ENCODE measurements at regions of chr6 and their contacts with region 1.

Region 1: DNA sequence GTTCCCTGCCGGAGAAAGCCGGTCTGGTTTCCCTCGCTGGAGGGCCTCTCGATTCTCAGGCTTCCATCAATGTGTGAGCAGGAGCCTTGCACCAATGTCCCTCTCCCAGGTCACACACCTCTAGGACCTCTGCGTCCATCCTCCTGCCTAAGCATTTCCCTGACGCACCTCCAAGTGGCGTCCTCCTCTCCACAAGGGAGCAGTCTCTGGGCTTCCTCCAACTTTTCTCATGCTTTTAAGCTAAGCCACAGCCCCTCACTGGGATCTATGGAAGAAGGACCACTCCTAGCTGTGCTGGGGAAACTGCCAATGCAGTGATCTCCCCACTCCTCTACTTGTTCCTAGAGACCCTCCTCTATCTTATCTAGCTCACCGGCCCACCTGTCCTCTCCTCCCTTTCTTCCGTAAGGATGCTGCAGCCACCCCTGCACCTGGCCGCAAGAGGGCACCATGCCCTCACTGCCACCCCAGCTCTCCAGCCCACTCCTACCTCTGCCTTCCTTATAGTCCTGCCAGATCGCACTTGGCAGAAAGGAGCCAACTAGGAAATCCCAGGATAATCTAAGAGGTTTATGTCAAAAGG is 258.7 kb downstream of the LRFN2 start:
- DNase-seq: peak; percentile 56
- ATAC-seq: peak; percentile 69
- H3K4me3 Mint-ChIP-seq: no peak overlapping the region
- H3K27ac Mint-ChIP-seq: no peak overlapping the region
- H3K4me1 Mint-ChIP-seq: peaks cover 30% of the 10 kb centered on the region
- H3K27me3 Mint-ChIP-seq: peaks cover 15% of the 10 kb centered on the region

Region 2: GRCh38 chr6:40912158-40912946 is 583.9 kb after region 1 on chr6:
- CTCF ChIA-PET with region 1: interaction called, 18 read pairs
- POLR2A ChIA-PET with region 1: no interaction called
- DNase-seq: peak; percentile 71
- ATAC-seq: peak; percentile 96
- H3K4me3 Mint-ChIP-seq: no peak overlapping the region
- H3K27ac Mint-ChIP-seq: no peak overlapping the region
- H3K4me1 Mint-ChIP-seq: peaks cover 5% of the 10 kb centered on the region
- H3K27me3 Mint-ChIP-seq: peaks cover 21% of the 10 kb centered on the region

Measured in activated CD8-positive, alpha-beta T cell treated with anti-CD3 and anti-CD28 coated beads, Interleukin-2, amount 10 ng/mL, durations not matched to agents 7 days and 5 days (primary cell).